Breast epithelium (tissue), 4 donors: ENCODE measurements at regions of chr2 and their contacts with region 1.

Region 1: GRCh38 chr2:38581193-38582147 is 21.3 kb downstream of the HNRNPLL start:
- DNase-seq: no peak
- H3K4me3 ChIP-seq: no peak overlapping the region
- H3K27ac ChIP-seq: no peak overlapping the region
- H3K4me1 ChIP-seq: no peaks in the 10 kb centered on the region
- H3K27me3 ChIP-seq: no peaks in the 10 kb centered on the region
- CTCF ChIP-seq: peak; percentile 72 to 76 (median 72)
- POLR2A ChIP-seq: no peak

Region 2: DNA sequence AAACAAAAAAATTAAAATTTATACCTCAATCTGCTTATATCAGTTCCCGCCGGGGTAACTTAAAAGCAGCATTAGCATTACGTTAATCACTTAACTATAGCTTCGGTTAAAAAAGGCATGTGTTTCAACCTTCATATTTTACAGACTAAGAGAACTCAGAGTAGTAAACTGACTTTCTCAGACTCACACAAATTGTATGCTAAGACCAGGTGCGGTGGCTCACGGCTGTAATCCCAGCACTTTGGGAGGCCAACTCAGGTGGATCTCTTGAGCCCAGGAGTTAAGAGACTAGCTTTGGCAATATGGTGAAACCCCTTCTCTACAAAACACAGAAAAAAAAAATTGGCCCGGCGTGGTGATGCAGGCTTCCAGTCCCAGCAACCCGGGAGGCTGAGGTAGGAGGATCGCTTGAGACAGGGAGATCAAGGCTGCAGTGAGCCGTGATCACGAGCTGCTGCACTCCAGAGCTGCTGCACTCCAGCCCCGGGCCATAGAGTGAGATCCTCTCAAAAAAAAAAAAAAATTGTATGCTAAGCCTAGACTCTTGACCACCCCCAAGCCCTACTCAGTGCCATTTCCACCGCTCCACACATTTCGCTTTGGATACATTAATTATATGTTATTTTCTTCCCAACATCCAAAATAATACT is 18.9 kb after region 1 on chr2:
- intact Hi-C with region 1: no loop called
- DNase-seq: no peak
- H3K4me3 ChIP-seq: peak overlapping the region; percentile 88 to 98 (median 96)
- H3K27ac ChIP-seq: peak overlapping the region; percentile 26 to 99
- H3K4me1 ChIP-seq: peaks cover 0 to 9% of the 10 kb centered on the region in 2 donors
- H3K27me3 ChIP-seq: no peaks in the 10 kb centered on the region
- CTCF ChIP-seq: no peak
- POLR2A ChIP-seq: no peak

Region 3: DNA sequence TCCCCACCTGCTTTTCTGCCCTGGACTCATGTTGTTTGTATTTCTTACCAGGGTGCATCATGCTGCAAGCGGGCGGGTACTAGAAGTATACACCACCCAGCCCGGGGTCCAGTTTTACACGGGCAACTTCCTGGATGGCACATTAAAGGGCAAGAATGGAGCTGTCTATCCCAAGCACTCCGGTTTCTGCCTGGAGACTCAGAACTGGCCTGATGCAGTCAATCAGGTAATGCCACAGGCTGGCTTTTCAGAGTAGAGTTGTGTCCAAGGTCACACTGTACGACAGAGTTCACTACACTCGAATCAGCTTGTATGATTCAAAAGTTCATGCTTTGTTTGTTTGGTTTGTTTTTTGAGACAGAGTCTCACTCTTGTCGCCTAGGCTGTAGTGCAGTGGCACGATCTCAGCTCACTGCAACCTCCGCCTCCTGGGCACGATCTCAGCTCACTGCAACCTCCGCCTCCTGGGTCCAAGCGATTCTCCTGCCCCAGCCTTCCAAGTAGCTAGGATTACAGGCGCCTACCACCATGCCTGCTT is 150.3 kb after region 1 on chr2:
- intact Hi-C with region 1: loop called (anchors 2 kb)
- DNase-seq: no peak
- H3K4me3 ChIP-seq: no peak overlapping the region
- H3K27ac ChIP-seq: no peak overlapping the region
- H3K4me1 ChIP-seq: no peaks in the 10 kb centered on the region
- H3K27me3 ChIP-seq: no peaks in the 10 kb centered on the region
- CTCF ChIP-seq: no peak
- POLR2A ChIP-seq: no peak

Region 4: GRCh38 chr2:39266139-39266805 is 684.8 kb after region 1 on chr2:
- intact Hi-C with region 1: no loop called
- DNase-seq: no peak
- H3K4me3 ChIP-seq: no peak overlapping the region
- H3K27ac ChIP-seq: no peak overlapping the region
- H3K4me1 ChIP-seq: no peaks in the 10 kb centered on the region
- H3K27me3 ChIP-seq: no peaks in the 10 kb centered on the region
- CTCF ChIP-seq: no peak
- POLR2A ChIP-seq: no peak